ENCODE measurements at regions of chr6 and their contacts with region 1.

Region 1: DNA sequence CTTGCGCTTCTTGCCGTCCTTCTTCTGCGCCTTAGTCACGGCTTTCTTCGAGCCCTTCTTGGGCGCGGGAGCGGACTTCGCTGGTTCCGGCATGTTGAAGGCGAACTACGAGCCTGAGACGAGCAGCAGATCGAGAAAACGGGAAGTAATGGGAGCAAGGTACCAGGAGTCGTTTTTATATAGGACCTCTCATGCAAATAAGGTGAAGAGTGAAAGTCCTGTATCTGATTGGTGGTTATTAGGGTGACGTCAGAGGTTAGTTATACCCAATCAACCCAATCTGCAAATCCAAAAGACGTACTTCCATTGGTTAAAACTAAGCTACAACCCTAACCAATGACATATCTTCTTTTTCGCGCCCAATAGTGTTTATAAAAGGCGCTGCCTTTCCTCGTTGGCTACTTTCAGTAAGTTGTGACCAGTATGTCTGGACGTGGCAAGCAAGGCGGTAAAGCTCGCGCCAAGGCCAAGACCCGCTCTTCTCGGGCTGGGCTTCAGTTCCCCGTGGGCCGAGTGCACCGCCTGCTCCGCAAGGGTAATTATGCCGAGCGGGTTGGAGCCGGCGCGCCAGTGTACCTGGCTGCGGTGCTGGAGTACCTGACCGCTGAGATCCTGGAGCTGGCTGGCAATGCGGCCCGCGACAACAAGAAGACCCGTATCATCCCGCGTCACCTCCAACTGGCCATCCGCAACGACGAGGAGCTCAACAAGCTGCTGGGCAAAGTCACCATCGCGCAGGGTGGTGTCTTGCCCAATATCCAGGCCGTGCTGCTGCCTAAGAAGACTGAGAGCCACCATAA is 100.6 kb upstream of the PRSS16 start:
- DNase-seq: peak; percentile 71 to 96 (median 92)
- ATAC-seq: peak; percentile 92
- H3K4me3 ChIP-seq: peak overlapping the region; percentile 90
- H3K4me3 Mint-ChIP-seq: no peak overlapping the region
- H3K27ac ChIP-seq: peak overlapping the region; percentile 89
- H3K27ac Mint-ChIP-seq: no peak overlapping the region
- H3K4me1 ChIP-seq: peaks cover 6 to 7% of the 10 kb centered on the region in 2 donors
- H3K4me1 Mint-ChIP-seq: peaks cover 0 to 26% (median 14%) of the 10 kb centered on the region in 7 donors
- H3K27me3 ChIP-seq: no peaks in the 10 kb centered on the region
- H3K27me3 Mint-ChIP-seq: no peaks in the 10 kb centered on the region

Region 2: DNA sequence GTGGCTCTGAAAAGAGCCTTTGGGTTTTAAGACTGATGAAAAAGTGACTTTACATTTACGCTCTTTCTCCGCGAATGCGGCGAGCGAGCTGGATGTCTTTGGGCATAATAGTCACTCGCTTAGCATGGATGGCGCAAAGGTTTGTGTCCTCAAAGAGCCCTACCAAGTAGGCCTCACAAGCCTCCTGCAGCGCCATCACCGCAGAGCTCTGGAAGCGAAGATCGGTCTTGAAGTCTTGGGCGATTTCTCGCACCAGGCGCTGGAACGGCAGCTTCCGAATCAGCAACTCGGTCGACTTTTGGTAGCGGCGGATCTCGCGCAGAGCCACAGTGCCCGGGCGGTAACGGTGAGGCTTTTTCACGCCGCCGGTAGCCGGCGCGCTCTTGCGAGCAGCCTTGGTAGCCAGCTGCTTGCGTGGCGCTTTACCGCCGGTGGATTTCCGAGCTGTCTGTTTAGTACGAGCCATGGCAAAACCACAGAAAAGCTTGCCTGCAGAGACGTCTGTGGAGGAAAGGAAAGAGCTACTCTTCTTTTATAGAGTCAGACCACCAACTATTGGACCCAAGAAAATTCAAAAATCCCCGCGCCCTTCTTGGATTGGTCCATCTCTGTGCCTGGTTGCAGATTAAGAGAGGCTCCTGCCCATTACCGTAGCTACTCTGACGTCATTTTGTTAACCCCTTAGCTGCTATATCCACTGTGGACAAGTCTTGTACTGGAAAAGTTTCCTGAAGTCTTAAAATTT is 1115.1 kb before region 1 on chr6:
- CTCF ChIA-PET with region 1: interaction called, 3 read pairs
- POLR2A ChIA-PET with region 1: interaction called, 46 read pairs
- intact Hi-C with region 1: loop called (anchors 2 kb)
- DNase-seq: peak; percentile 56 to 94 (median 90)
- ATAC-seq: peak; percentile 79
- H3K4me3 ChIP-seq: peak overlapping the region; percentile 70
- H3K4me3 Mint-ChIP-seq: peak overlapping the region; percentile 89 to 98 (median 96)
- H3K27ac ChIP-seq: peak overlapping the region; percentile 69
- H3K27ac Mint-ChIP-seq: peak overlapping the region; percentile 93 to 98 (median 96)
- H3K4me1 ChIP-seq: peaks cover 23 to 31% of the 10 kb centered on the region in 2 donors
- H3K4me1 Mint-ChIP-seq: peaks cover 14 to 69% (median 43%) of the 10 kb centered on the region in 7 donors
- H3K27me3 ChIP-seq: no peaks in the 10 kb centered on the region
- H3K27me3 Mint-ChIP-seq: peaks cover 0 to 7% (median 0%) of the 10 kb centered on the region in 5 donors

Region 3: DNA sequence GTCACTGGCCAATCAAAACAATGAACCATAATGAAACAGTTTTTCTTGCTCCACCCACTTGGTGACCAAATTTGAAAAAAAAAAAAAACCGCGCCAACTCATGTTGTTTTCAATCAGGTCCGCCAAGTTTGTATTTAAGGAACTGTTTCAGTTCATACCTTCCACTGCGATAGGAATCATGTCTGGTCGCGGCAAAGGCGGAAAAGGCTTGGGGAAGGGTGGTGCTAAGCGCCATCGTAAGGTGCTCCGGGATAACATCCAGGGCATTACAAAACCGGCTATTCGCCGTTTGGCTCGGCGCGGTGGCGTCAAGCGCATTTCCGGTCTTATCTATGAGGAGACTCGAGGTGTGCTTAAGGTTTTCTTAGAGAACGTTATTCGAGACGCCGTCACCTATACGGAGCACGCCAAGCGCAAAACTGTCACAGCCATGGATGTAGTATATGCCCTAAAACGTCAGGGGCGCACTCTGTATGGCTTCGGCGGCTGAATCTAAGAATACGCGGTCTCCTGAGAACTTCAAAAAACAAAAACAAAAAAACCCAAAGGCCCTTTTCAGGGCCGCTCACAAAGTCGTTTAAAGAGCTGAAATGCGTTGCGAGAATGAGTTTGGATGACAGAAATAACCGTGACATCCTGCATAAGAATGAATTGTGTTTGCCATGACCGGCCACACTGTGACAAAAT is 1043.0 kb before region 1 on chr6:
- CTCF ChIA-PET with region 1: interaction called, 4 read pairs
- POLR2A ChIA-PET with region 1: interaction called, 5 read pairs
- intact Hi-C with region 1: loop called in 1 of 2 experiments (anchors 5 kb)
- DNase-seq: peak; percentile 83 to 96 (median 95)
- ATAC-seq: peak; percentile 94
- H3K4me3 ChIP-seq: peak overlapping the region; percentile 40
- H3K4me3 Mint-ChIP-seq: peak overlapping the region; percentile 81 to 97 (median 89)
- H3K27ac ChIP-seq: peak overlapping the region; percentile 75
- H3K27ac Mint-ChIP-seq: peak overlapping the region; percentile 96 to 100 (median 98)
- H3K4me1 ChIP-seq: peaks cover 4 to 12% of the 10 kb centered on the region in 2 donors
- H3K4me1 Mint-ChIP-seq: peaks cover 7 to 25% (median 22%) of the 10 kb centered on the region in 7 donors
- H3K27me3 ChIP-seq: no peaks in the 10 kb centered on the region
- H3K27me3 Mint-ChIP-seq: peaks cover 0 to 3% (median 0%) of the 10 kb centered on the region in 5 donors

Region 4: GRCh38 chr6:26234421-26235296 is 912.2 kb before region 1 on chr6:
- CTCF ChIA-PET with region 1: no interaction called
- POLR2A ChIA-PET with region 1: interaction called, 48 read pairs
- intact Hi-C with region 1: no loop called
- DNase-seq: peak; percentile 48 to 94 (median 85)
- ATAC-seq: peak; percentile 80
- H3K4me3 ChIP-seq: peak overlapping the region; percentile 93
- H3K4me3 Mint-ChIP-seq: peak overlapping the region; percentile 87 to 99 (median 94)
- H3K27ac ChIP-seq: peak overlapping the region; percentile 87
- H3K27ac Mint-ChIP-seq: peak overlapping the region; percentile 93 to 100 (median 98)
- H3K4me1 ChIP-seq: peaks cover under 1 to 18% of the 10 kb centered on the region in 2 donors
- H3K4me1 Mint-ChIP-seq: peaks cover 18 to 52% (median 38%) of the 10 kb centered on the region in 7 donors
- H3K27me3 ChIP-seq: no peaks in the 10 kb centered on the region
- H3K27me3 Mint-ChIP-seq: peaks cover 0 to 15% (median 0%) of the 10 kb centered on the region in 5 donors

Region 5: GRCh38 chr6:27049863-27050781 is 96.8 kb before region 1 on chr6:
- CTCF ChIA-PET with region 1: no interaction called
- POLR2A ChIA-PET with region 1: no interaction called
- intact Hi-C with region 1: no loop called
- DNase-seq: no peak
- ATAC-seq: no peak
- H3K4me3 ChIP-seq: no peak overlapping the region
- H3K4me3 Mint-ChIP-seq: no peak overlapping the region
- H3K27ac ChIP-seq: no peak overlapping the region
- H3K27ac Mint-ChIP-seq: no peak overlapping the region
- H3K4me1 ChIP-seq: no peaks in the 10 kb centered on the region
- H3K4me1 Mint-ChIP-seq: no peaks in the 10 kb centered on the region
- H3K27me3 ChIP-seq: no peaks in the 10 kb centered on the region
- H3K27me3 Mint-ChIP-seq: peaks cover 0 to 32% (median 7%) of the 10 kb centered on the region in 5 donors

Region 6: DNA sequence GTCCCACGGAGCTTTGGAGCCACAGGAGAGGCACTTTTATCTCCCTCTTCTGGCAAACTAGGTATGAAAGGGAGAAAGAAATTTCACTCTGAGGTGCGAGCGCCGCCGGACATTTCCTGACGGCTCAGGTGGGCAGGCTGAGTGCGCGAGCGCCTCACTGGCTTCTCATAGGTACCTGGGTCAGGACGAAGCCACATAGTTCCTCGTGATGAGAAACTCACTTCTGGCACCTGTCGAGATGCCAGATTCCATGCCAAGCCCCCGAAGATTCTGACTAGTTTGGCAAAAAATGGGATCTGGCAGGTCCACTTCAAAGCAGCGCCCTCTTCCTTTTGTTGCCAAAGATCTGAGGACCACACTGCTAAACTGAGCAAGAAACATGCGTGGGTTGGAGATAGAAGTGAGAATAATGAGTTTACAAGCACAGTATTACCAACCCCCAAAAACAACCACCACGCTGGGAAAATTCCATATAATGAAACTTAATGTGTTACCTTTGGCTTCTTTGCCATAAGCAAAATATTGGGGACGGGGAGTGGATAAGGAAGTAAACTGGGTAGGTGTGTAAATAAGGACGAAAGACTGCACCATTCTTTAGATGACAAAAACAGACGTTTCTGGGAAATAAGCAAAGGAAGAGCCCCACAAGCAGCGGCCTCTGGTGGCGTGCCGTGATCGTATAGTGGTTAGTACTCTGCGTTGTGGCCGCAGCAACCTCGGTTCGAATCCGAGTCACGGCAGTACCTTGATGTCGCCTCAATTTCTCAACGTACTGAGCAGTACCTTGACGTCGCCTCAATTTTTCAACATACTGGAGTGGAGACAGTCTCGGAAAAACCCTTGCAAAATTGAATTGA is 10.8 kb after region 1 on chr6:
- CTCF ChIA-PET with region 1: interaction called, 5 read pairs
- POLR2A ChIA-PET with region 1: interaction called, 89 read pairs
- intact Hi-C with region 1: loop called (anchors 1 kb)
- DNase-seq: peak in 8 of 9 donors; percentile 77 to 92 (median 87)
- ATAC-seq: peak; percentile 86
- H3K4me3 ChIP-seq: peak overlapping the region; percentile 76
- H3K4me3 Mint-ChIP-seq: peak overlapping the region; percentile 82 to 94 (median 87)
- H3K27ac ChIP-seq: peak overlapping the region; percentile 54
- H3K27ac Mint-ChIP-seq: peak overlapping the region; percentile 80 to 96 (median 92)
- H3K4me1 ChIP-seq: peaks cover 12% of the 10 kb centered on the region in 2 donors
- H3K4me1 Mint-ChIP-seq: peaks cover 29 to 47% (median 43%) of the 10 kb centered on the region in 7 donors
- H3K27me3 ChIP-seq: no peaks in the 10 kb centered on the region
- H3K27me3 Mint-ChIP-seq: peaks cover 0 to 6% (median 0%) of the 10 kb centered on the region in 5 donors

Region 7: DNA sequence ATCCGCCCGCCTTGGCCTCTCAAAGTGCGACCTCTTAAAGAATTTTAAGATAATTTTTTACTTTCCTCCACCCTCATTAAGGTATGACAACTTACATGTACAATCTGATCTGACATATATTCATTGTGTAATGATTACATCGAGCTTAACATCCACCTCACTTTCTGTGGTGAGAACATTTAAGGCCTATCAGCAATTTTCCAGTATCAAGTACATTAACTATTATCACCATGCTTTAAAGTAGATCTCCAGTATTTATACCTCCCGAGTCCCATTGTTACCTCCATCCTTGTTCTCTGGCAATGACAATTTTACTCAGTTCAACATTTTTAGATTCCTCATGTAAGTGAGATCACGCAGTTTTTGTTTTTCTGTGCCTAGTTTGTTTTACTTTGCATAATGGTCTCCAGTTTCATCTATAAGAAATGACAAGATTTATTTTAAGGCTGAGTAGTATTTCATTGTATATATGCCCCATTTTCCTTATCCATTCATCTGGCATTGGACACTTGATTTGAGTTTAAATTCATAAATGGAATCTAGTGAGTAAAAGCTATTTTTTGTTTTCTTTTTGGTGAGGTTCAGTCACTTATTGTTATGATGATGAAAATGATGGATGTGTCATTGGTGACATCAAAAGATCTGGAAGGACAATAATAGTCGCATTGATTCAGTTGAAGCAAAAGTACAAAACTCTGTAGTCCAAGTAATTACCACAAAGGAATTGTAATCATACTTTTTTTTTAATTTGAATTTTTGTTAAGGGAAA is 678.3 kb after region 1 on chr6:
- CTCF ChIA-PET with region 1: no interaction called
- POLR2A ChIA-PET with region 1: interaction called, 12 read pairs
- intact Hi-C with region 1: no loop called
- DNase-seq: no peak
- ATAC-seq: no peak
- H3K4me3 ChIP-seq: peak overlapping the region; percentile 87
- H3K4me3 Mint-ChIP-seq: peak overlapping the region; percentile 82 to 99 (median 94)
- H3K27ac ChIP-seq: peak overlapping the region; percentile 89
- H3K27ac Mint-ChIP-seq: peak overlapping the region; percentile 90 to 100 (median 98)
- H3K4me1 ChIP-seq: peaks cover 6% of the 10 kb centered on the region in 2 donors
- H3K4me1 Mint-ChIP-seq: peaks cover 11 to 50% (median 33%) of the 10 kb centered on the region in 7 donors
- H3K27me3 ChIP-seq: no peaks in the 10 kb centered on the region
- H3K27me3 Mint-ChIP-seq: peaks cover 0 to 4% (median 0%) of the 10 kb centered on the region in 5 donors

Region 8: GRCh38 chr6:28895134-28895812 is 1748.4 kb after region 1 on chr6:
- CTCF ChIA-PET with region 1: no interaction called
- POLR2A ChIA-PET with region 1: no interaction called
- intact Hi-C with region 1: loop called in 1 of 2 experiments (anchors 5 kb)
- DNase-seq: peak; percentile 72 to 95 (median 91)
- ATAC-seq: peak; percentile 83
- H3K4me3 ChIP-seq: peak overlapping the region; percentile 82
- H3K4me3 Mint-ChIP-seq: peak overlapping the region; percentile 92 to 100 (median 98)
- H3K27ac ChIP-seq: peak overlapping the region; percentile 99
- H3K27ac Mint-ChIP-seq: peak overlapping the region; percentile 98 to 100 (median 100)
- H3K4me1 ChIP-seq: peaks cover 5 to 6% of the 10 kb centered on the region in 2 donors
- H3K4me1 Mint-ChIP-seq: peaks cover 0 to 32% (median 14%) of the 10 kb centered on the region in 7 donors
- H3K27me3 ChIP-seq: no peaks in the 10 kb centered on the region
- H3K27me3 Mint-ChIP-seq: peaks cover 0 to 15% (median 0%) of the 10 kb centered on the region in 5 donors